ENCODE measurements at regions of chr19 and their contacts with region 1.

Region 1: GRCh38 chr19:3102228-3103140 is 8.3 kb downstream of the GNA11 start:
- DNase-seq: no peak
- H3K4me3 ChIP-seq: no peak overlapping the region
- H3K27ac ChIP-seq: peak overlapping the region; percentile 15 to 25
- H3K4me1 ChIP-seq: peaks cover 14 to 22% of the 10 kb centered on the region in 2 donors
- H3K27me3 ChIP-seq: no peaks in the 10 kb centered on the region
- CTCF ChIP-seq: no peak
- POLR2A ChIP-seq: no peak

Region 2: GRCh38 chr19:2962045-2962561 is 140.4 kb before region 1 on chr19:
- intact Hi-C with region 1: loop called (anchors 2 kb)
- DNase-seq: no peak
- H3K4me3 ChIP-seq: peak overlapping the region in 1 of 3 donors; percentile 9
- H3K27ac ChIP-seq: peak overlapping the region in 1 of 2 donors; percentile 12
- H3K4me1 ChIP-seq: no peaks in the 10 kb centered on the region
- H3K27me3 ChIP-seq: no peaks in the 10 kb centered on the region
- CTCF ChIP-seq: peak; percentile 95 to 98 (median 95)
- POLR2A ChIP-seq: no peak

Measured in breast epithelium (tissue), 4 donors.